ENCODE measurements at regions of chr15 and their contacts with region 1.

Region 1: DNA sequence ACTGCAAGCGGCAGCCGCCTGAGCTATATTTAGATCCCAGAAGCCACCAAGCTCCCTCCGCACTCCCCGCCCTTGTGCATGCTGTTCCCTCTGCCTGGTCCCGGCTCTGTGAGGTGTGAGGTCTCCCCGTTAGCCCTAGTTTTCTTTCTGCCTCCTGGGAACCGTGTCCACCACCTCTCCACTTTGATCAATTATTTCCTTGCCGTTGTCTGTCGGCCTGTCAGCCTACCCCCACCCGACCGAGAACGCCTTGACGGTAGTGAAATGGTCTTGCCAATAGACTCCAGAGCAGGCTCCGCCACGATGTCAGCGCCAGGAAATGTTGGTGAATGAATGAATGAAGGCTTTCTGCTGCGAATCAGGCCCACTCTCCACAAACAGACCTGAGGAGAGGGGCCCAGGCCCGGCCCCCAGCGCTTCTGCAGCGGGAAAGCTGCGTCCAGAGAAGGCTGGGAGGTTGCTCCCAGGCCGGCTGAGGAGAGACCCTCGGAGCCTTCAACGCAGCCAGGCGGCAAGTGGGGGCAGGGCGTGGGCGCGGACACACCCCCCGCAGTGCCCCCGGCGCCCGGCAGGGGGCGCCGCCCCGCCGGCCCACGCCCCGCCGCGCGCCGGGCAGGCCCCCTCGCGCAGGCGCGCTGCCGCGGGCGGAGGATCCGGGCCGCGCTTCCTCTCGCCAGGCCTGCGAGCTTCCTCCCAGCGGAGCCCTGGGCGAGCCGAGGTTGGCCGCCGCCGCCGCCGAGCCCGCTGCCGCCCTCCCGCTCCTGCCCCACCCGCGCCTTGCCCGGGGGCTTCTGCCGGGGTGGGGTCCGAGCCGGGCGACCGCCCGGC is at the start of gene CSK:
- H3K4me3 ChIP-seq: peak within 1 kb of the TSS; percentile 60
- H3K27ac ChIP-seq: peak within 1 kb of the TSS; percentile 95
- H3K4me1 ChIP-seq: peaks cover 27% of the 10 kb centered on the region
- CTCF ChIP-seq: no peak

Region 2: DNA sequence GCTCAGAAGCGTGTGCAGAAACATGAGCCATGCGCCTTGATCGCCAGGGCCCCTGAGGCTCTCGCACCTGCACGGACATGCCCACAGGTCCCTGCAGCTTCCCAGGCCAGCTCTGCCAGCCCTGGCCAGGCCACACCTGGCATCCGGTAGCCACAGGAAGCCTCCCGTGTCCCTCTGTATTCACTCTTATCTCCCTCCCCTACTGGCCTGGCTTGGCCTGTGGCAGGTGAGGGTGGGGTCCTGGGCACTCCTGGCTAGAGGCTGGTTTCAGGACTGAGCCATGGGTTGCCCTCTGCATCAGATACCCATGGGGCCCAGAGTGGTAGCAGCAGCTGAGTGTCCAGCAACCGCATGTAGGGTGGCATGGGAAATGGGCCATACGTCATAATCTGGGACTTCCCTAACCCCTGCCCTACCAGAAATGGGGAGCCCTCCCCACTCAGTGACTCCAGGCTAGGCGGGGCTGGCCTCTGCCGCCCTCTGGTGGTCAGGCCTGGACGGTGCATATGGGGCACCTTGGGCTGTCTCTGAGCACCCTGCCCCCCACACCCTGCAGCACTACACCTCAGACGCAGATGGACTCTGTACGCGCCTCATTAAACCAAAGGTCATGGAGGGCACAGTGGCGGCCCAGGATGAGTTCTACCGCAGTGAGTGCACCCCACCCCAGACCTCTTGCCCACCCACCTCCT is 18.4 kb after region 1 on chr15:
- CTCF ChIA-PET with region 1: interaction called, 649 read pairs
- POLR2A ChIA-PET with region 1: interaction called, 3 read pairs
- H3K4me3 ChIP-seq: no peak overlapping the region
- H3K27ac ChIP-seq: peak overlapping the region; percentile 20; the same call in 1 of the 2 replicates
- H3K4me1 ChIP-seq: no peaks in the 10 kb centered on the region
- CTCF ChIP-seq: peak; percentile 97

Region 3: GRCh38 chr15:74808073-74808755 is 26.6 kb after region 1 on chr15:
- CTCF ChIA-PET with region 1: interaction called, 11 read pairs
- POLR2A ChIA-PET with region 1: interaction called, 4 read pairs
- H3K4me3 ChIP-seq: no peak overlapping the region
- H3K27ac ChIP-seq: no peak overlapping the region
- H3K4me1 ChIP-seq: no peaks in the 10 kb centered on the region
- CTCF ChIP-seq: no peak